ENCODE measurements at regions of chr14 and their contacts with region 1.

Region 1: DNA sequence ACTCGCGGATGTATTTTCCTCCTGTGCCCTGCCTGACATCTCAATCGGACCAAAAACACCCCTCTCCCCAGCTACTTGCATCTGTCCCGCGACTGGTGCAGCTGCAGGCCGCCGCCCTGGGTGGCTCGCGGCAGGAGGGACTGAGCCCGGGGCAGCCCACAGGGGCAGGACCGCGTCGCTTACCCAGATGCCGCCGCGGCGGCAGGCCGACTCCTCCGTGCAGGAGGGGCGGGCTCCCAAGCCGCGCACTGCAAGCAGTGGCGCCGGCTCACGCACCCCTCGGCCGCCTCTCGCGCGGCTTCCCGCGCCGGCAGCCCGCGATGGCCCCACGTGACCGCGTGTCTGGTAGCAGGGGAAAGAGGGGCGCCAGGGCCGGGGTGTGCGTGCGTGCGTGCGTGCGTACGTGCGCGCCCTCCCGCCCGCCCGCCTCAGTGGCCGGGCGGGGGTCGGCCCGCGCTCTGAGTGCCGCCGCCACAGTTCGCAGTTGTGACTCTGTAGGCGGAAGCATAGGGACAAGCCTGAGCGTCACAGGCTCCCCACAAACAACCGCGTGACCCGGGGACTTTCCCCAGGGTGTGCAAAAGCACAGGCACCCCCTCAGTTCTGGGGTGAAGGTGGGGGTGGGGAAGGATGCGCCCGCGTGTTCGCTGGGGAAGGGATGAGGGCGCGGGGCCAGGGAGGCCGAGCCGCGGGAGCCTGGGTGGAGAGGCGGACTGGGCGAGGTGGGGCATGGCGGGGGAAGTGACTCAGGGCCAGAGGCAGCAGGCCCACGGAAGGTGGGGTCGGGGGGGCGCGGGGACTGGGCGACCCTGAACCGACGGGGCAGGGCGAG is at the start of gene ZBTB25:
- H3K4me3 ChIP-seq: peak within 1 kb of the TSS; percentile 62
- H3K27ac ChIP-seq: peak within 1 kb of the TSS; percentile 99
- H3K4me1 ChIP-seq: peaks cover 23% of the 10 kb centered on the region
- CTCF ChIP-seq: no peak

Region 2: GRCh38 chr14:64338616-64339316 is 164.9 kb before region 1 on chr14:
- CTCF ChIA-PET with region 1: no interaction called
- POLR2A ChIA-PET with region 1: interaction called, 13 read pairs
- H3K4me3 ChIP-seq: peak overlapping the region; percentile 77
- H3K27ac ChIP-seq: peak overlapping the region; percentile 94
- H3K4me1 ChIP-seq: no peaks in the 10 kb centered on the region
- CTCF ChIP-seq: no peak

Region 3: GRCh38 chr14:64349741-64350490 is 153.8 kb before region 1 on chr14:
- CTCF ChIA-PET with region 1: no interaction called
- POLR2A ChIA-PET with region 1: no interaction called
- H3K4me3 ChIP-seq: no peak overlapping the region
- H3K27ac ChIP-seq: no peak overlapping the region
- H3K4me1 ChIP-seq: no peaks in the 10 kb centered on the region
- CTCF ChIP-seq: no peak

Measured in HEK293 (cell line).